BJ (cell line): ENCODE measurements at regions of chr11 and their contacts with region 1.

Region 1: DNA sequence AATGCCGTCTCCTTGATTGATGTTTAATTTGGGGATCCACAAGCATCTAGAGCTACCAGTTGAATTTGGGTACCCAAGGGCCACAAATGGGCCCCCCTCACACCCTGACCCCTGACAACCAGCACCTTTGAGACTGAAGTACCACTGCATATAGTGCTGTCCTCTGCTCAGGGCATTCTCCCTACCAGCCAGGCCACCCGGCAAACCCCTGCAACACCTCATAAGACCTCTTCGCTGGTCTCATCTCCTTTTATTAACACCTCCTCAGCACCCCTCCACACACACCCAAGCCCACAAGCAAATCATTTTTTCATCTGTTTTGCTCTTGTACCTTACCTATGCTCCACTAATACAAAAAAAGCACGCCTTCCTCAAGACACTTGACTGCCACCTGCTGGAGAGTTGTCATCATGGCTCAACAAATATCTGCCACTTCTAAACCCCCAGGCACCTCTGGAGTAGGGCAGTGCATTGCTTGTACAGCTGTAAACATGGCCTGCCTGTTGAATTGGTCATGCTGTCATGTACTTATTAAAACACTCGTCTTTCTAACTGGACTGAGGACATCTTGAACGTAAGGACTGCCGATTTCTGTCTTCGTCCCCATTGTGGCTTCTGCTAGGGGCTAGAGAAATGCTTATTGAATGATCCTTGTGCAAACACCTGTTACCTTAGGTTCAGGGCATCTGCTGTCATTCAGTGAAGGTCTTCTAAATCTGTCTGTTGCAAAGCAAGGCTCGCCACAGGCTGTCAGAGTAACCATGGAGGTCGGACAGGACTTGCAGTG is 66.5 kb downstream of the BMAL1 start:
- DNase-seq: no peak
- H3K4me3 ChIP-seq: no peak overlapping the region
- H3K27me3 ChIP-seq: no peaks in the 10 kb centered on the region
- CTCF ChIP-seq: peak; percentile 79

Region 2: DNA sequence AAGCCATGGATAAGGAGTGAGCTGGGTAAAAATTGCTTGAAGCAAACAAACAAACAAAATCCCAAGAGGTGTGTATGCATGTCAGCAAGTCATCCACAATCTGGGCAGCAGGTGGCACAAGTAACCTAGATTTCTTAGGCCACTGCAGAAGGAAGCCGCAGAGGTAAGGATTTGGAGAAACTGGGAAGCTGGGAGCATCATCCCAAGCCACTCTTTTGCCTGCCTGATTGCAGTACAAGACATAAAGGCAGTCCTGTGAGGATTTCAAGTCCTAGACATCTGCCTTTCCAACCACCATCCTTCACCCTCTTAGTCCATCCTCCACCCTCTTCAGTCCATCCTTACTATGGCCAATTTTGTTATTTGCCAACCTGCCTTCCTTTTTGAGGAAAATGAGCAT is 133.7 kb before region 1 on chr11:
- CTCF ChIA-PET with region 1: interaction called, 95 read pairs
- POLR2A ChIA-PET with region 1: no interaction called
- DNase-seq: peak; percentile 26
- H3K4me3 ChIP-seq: no peak overlapping the region
- H3K27me3 ChIP-seq: no peaks in the 10 kb centered on the region
- CTCF ChIP-seq: peak; percentile 55

Region 3: GRCh38 chr11:13216019-13216710 is 128.0 kb before region 1 on chr11:
- CTCF ChIA-PET with region 1: interaction called, 95 read pairs
- POLR2A ChIA-PET with region 1: no interaction called
- DNase-seq: peak; percentile 80
- H3K4me3 ChIP-seq: no peak overlapping the region
- H3K27me3 ChIP-seq: no peaks in the 10 kb centered on the region
- CTCF ChIP-seq: 0 out of 2 replicates have a peak, but pooled peaks have one; percentile 8

Region 4: GRCh38 chr11:13277768-13278613 is 66.1 kb before region 1 on chr11 and contains the start of gene BMAL1:
- CTCF ChIA-PET with region 1: no interaction called
- POLR2A ChIA-PET with region 1: no interaction called
- DNase-seq: no peak
- H3K4me3 ChIP-seq: peak within 1 kb of the TSS; percentile 75
- H3K27me3 ChIP-seq: peaks cover 6% of the 10 kb centered on the region
- CTCF ChIP-seq: no peak
- polyA plus RNA-seq, gene BMAL1: 6.1 and 6.4 TPM in 2 replicates